Endothelial cell of umbilical vein (primary cell): ENCODE measurements at regions of chr7 and their contacts with region 1.

Region 1: DNA sequence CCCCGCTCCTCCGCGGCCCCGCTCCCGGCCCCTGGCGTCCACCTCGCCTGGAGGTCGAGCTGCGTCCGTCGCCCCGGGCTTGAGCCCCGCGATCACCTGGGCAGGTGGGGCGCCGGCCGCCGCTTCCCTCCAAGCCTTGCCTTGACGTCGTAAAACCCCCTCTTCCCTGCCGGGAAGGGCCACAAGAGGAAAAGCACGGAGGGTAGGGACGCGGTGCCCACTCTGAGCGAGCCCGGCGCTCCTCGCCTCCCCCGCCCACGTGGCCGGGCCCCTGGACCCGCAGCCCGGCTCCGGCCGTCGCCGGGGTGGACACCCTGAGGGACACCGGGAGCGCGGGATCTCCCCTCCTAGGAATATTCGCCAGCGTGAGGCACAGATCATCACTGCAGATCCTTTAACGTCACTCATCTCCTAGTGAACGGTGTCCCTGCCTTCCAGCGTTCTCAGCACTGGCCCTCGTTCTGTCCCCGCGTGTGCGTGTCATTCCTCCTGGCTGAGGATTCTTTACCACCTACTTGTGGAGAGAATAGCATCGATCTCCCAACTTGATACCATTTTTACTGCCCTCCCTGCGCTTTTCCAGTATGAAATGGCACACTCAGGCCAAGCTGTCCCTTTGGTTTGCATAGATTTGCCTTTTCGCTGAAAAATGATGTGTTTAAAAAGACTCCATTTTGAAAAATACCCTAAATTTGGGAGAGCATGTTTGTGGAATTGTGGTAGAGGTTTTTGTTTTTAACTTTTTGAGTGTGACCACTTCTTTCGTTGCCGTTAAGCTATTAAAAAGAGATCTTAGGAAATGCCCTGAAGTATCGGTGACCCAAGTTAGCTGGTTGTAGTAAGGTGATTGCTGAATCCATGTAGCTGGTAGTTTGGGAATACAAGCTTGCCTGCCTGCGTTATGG is 649 bp downstream of the ACTR3B start:
- DNase-seq: peak; percentile 43
- H3K4me3 ChIP-seq: peak overlapping the region; percentile 37 to 74 (median 71)
- H3K27ac ChIP-seq: peak overlapping the region; percentile 70
- H3K4me1 ChIP-seq: peaks cover 13% of the 10 kb centered on the region
- H3K27me3 ChIP-seq: peaks cover 0 to 2% of the 10 kb centered on the region in 2 experiments
- CTCF ChIP-seq: no peak
- POLR2A ChIP-seq: no peak

Region 2: GRCh38 chr7:152463709-152464311 is 296.4 kb before region 1 on chr7:
- CTCF ChIA-PET with region 1: no interaction called
- POLR2A ChIA-PET with region 1: no interaction called
- dilution Hi-C with region 1: no loop called
- intact Hi-C with region 1: loop called (anchors 2 kb)
- DNase-seq: peak; percentile 99
- H3K4me3 ChIP-seq: peak overlapping the region; percentile 42 to 97 (median 69)
- H3K27ac ChIP-seq: peak overlapping the region; percentile 91
- H3K4me1 ChIP-seq: peaks cover 12% of the 10 kb centered on the region
- H3K27me3 ChIP-seq: no peaks in the 10 kb centered on the region
- CTCF ChIP-seq: no peak
- POLR2A ChIP-seq: peak; percentile 76

Region 3: DNA sequence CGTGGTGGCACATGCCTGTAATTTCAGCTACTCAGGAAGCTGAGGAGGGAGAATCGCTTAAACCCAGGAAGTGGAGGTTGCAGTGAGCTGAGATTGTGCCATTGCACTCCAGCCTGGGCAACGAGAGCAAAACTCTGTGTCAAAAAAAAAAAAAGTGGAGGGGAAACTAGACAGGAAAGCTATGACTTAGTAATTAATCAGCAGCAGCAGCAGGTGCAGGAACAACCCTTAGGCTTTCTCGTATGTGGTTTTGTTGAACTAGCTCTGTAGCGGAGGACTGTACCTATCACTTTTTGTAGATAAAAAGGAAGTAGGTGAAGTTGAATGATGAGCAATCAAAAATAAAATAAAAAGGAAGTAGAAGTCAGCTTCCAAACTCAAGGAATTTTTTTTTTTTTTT is 247.5 kb before region 1 on chr7:
- CTCF ChIA-PET with region 1: no interaction called
- POLR2A ChIA-PET with region 1: no interaction called
- dilution Hi-C with region 1: no loop called
- intact Hi-C with region 1: no loop called
- DNase-seq: no peak
- H3K4me3 ChIP-seq: no peak overlapping the region
- H3K27ac ChIP-seq: no peak overlapping the region
- H3K4me1 ChIP-seq: no peaks in the 10 kb centered on the region
- H3K27me3 ChIP-seq: no peaks in the 10 kb centered on the region
- CTCF ChIP-seq: no peak
- POLR2A ChIP-seq: no peak

Region 4: DNA sequence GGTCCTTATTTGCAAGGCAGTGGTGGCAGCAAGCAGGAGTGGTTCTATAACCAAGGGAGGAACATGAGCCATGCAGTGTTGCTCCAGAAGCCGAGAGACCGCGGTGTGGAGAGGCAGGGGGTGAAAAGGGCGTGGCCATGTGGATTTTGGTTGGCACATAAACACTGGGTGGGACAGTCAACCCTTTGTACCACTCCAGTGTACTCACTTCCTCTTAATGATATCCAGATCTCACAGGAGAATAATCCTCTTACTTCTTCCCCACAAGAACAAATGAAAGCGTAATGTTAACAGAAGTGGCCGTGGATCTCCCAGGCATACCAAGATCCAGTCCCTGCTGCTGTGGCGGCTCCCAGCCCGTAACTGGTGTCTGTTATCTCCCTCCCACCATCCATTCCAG is 126.7 kb before region 1 on chr7:
- CTCF ChIA-PET with region 1: no interaction called
- POLR2A ChIA-PET with region 1: no interaction called
- dilution Hi-C with region 1: no loop called
- intact Hi-C with region 1: no loop called
- DNase-seq: no peak
- H3K4me3 ChIP-seq: no peak overlapping the region
- H3K27ac ChIP-seq: no peak overlapping the region
- H3K4me1 ChIP-seq: no peaks in the 10 kb centered on the region
- H3K27me3 ChIP-seq: no peaks in the 10 kb centered on the region
- CTCF ChIP-seq: no peak
- POLR2A ChIP-seq: no peak

Region 5: DNA sequence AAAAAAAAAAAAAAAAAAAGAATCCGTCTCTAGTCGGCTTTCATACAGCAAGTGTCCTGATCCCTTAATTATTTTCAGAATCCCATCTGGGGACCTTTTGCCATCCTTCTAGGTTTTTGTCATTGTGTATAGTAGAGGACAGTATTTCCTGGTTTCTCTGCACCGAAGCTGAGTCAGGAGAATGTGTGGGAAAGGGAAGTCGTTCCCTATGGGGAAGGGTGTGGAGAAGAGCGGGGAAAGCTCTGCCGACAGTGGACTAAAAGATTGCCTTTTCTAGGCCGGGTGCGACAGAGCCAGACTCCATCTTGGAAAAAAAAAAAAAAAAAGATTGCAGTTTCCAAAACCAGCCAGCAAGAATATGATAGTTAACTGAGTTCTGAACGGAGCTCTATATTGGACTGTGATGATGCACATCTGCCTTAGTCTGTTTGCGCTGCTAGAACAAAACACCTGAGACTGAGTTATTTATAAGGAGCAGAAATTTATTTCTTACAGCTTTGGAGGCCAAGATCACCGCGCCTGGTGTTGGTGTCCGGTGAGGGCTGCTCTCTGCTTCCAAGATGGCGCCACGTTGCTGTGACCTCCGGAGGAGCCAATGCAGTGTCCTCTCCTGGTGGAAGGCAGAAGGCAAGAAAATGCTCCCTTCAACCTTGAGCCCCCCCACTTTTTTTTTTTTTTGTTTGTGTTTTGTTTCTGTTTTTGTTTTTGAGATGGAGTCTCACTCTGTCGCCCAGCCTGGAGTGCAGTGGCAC is 16.8 kb before region 1 on chr7:
- CTCF ChIA-PET with region 1: no interaction called
- POLR2A ChIA-PET with region 1: no interaction called
- dilution Hi-C with region 1: no loop called
- intact Hi-C with region 1: loop called (anchors 1 kb)
- DNase-seq: no peak
- H3K4me3 ChIP-seq: no peak overlapping the region
- H3K27ac ChIP-seq: no peak overlapping the region
- H3K4me1 ChIP-seq: no peaks in the 10 kb centered on the region
- H3K27me3 ChIP-seq: peaks cover 0 to 4% of the 10 kb centered on the region in 2 experiments
- CTCF ChIP-seq: no peak
- POLR2A ChIP-seq: no peak